Heart right ventricle (tissue), 16 donors: ENCODE measurements at regions of chr7 and their contacts with region 1.

Region 1: GRCh38 chr7:111867348-111867931 is 305.1 kb upstream of the IMMP2L start:
- DNase-seq: no peak
- ATAC-seq: peak in 4 of 8 donors; percentile 25 to 46 (median 38)
- H3K4me3 ChIP-seq: no peak overlapping the region
- H3K27ac ChIP-seq: peak overlapping the region in 4 of 10 donors; percentile 5 to 62 (median 28)
- H3K4me1 ChIP-seq: peaks cover 0 to 24% (median 5%) of the 10 kb centered on the region in 9 donors
- H3K27me3 ChIP-seq: no peaks in the 10 kb centered on the region
- CTCF ChIP-seq: no peak

Region 2: DNA sequence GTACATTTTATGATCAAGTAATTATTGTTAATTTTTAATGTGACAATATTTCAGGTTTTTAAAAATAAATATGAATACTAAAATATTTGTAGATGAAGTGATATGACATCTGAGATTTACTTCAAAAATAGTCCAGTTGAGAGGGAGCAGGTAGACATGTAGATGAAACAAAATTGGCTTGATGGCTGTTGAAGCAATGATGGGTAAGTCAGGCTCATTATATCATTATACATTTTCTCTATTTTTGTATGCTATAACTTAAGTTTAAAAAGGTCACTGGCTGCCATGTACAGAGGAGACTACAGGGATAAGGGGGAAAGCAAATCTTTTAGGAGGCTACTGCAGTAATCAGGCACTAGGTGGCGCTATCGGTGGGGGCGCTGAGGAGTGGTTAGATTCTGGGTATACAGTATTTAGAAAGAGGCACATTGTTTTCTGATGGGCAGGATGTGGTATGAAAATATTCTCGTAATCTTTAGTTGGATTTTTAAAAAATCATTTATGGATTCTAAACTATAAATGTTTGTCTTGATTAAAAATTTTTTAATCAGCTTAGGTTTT is 115.3 kb before region 1 on chr7:
- intact Hi-C with region 1: no loop called
- DNase-seq: peak; percentile 52 to 53
- ATAC-seq: peak in 5 of 8 donors; percentile 29 to 65 (median 62)
- H3K4me3 ChIP-seq: no peak overlapping the region
- H3K27ac ChIP-seq: no peak overlapping the region
- H3K4me1 ChIP-seq: no peaks in the 10 kb centered on the region
- H3K27me3 ChIP-seq: no peaks in the 10 kb centered on the region
- CTCF ChIP-seq: peak; percentile 36 to 85 (median 75)

Region 3: DNA sequence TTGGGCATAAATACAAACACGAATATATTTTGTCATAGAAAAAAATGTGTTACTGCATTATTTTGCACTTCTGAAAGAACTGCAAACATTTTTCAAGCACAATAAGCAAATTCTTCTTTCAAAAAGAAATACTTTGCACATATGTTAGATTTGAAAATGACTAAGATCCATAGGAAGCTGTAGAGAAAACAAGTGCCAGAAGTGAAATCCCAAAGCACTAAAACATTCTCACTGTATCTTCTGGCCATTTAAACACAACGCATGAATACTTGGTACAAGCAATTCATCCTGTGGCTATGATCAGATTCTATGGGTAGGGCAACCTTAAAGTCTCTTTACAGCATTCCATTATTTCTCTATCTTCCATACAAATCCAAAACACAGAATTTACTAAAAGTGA is 79.7 kb before region 1 on chr7:
- intact Hi-C with region 1: loop called in 1 of 10 experiments (anchors 2 kb)
- DNase-seq: no peak
- ATAC-seq: no peak
- H3K4me3 ChIP-seq: no peak overlapping the region
- H3K27ac ChIP-seq: no peak overlapping the region
- H3K4me1 ChIP-seq: peaks cover 0 to 7% (median 0%) of the 10 kb centered on the region in 9 donors
- H3K27me3 ChIP-seq: no peaks in the 10 kb centered on the region
- CTCF ChIP-seq: no peak

Region 4: DNA sequence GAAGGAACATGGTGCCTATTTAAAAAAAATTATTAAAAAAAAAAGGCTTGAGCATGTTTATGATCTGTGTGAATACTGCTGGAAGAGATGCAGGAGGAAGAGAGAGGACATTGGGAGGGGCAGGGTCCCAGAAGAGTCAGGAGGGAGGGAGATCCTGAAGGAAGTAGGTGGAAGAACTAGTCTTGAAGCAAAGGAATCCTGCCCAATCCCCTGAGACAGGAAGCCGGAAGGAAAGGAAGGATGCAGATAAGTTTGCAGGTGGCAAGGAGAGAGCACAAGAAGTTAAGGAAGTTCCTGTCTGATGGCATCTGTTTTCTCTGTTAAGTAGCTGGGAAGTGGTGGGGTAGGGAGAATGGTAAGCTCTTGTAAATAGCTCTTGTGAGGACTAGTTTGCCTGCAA is 20.3 kb after region 1 on chr7:
- intact Hi-C with region 1: no loop called
- DNase-seq: peak in 1 of 2 donors; percentile 34
- ATAC-seq: peak; percentile 38 to 82 (median 59)
- H3K4me3 ChIP-seq: no peak overlapping the region
- H3K27ac ChIP-seq: peak overlapping the region in 4 of 10 donors; percentile 5 to 69 (median 32)
- H3K4me1 ChIP-seq: peaks cover 0 to 15% (median 0%) of the 10 kb centered on the region in 9 donors
- H3K27me3 ChIP-seq: no peaks in the 10 kb centered on the region
- CTCF ChIP-seq: no peak